Activated B cell treated with CpG ODN at 0.5 μM for 24 hours (primary cell): ENCODE measurements at regions of chr20 and their contacts with region 1.

Region 1: GRCh38 chr20:208942-209566 is 18.0 kb upstream of the DEFB129 start:
- DNase-seq: no peak
- ATAC-seq: peak; percentile 70
- H3K4me3 Mint-ChIP-seq: no peak overlapping the region
- H3K27ac Mint-ChIP-seq: no peak overlapping the region
- H3K4me1 Mint-ChIP-seq: no peaks in the 10 kb centered on the region
- H3K27me3 Mint-ChIP-seq: peaks cover 3% of the 10 kb centered on the region
- CTCF ChIP-seq: no peak

Region 2: DNA sequence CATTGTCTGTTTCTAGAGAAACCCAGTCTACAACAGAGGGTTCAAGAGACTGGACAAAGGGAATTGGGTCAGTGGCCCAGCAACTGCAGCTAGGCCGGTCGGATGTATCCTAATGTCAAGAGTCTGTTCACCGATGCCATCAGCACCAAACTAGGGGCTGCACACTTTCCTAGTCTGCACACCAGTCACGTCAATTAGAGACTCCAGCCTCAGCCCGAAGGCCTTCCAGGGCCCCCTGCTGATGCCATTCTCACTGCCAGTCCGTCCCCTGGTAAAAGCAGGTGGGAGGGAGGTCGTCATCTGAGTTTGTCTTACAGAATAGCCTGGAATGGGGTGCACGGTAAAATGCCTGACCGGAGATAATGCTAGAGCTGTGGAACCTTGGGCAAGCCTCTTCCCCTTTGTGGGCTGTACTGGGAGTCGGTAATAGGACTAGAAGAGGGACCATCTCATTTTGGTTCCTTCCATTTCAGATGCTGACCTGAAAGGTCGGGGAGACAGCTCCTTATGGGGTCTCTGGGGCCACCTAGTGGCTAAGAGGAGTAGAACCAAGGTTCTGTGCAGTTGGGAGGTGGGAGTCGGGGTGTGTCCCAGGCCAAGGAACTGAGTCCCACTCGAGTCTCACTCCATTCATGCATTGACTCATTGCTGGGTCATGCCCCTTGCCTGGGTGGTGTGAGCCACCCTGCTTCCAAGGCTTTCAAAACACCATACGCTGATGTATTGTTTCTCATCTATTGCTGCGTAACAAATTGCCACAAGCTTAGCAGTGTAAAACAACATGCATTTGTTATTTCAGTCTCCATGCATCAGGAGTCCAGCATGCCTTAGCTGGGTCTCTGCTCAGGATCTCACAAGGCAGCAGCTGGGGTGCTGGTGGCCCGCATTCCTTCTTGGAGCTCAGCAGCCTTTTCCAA is 121.4 kb after region 1 on chr20:
- CTCF ChIA-PET with region 1: interaction called, 13 read pairs
- POLR2A ChIA-PET with region 1: no interaction called
- intact Hi-C with region 1: loop called (anchors 1 kb)
- DNase-seq: peak; percentile 34
- ATAC-seq: peak; percentile 51
- H3K4me3 Mint-ChIP-seq: peak overlapping the region; percentile 19
- H3K27ac Mint-ChIP-seq: peak overlapping the region; percentile 61
- H3K4me1 Mint-ChIP-seq: peaks cover 33% of the 10 kb centered on the region
- H3K27me3 Mint-ChIP-seq: no peaks in the 10 kb centered on the region
- CTCF ChIP-seq: peak; percentile 15

Region 3: DNA sequence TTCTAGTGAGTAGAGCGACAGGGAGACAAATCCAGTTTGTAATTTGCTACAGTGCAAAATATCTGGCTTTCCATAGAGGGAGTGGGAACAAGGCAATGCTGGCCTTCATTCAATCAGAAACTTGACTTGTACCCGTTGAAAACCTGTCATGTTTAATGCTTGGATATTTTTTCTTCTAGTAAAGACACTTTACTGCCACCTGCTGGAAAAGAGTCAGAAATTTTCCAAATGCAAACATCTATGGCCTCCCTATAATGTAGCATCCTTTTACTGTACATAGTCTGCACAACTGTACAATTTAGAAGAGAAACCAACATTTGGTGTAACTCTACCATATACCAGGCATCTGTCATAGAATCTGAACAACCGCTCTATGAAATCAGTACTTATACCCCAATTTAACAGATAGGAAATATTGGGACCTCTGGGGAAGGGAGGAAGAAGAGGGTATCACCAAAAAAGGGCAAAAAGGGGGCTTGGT is 269.9 kb after region 1 on chr20:
- CTCF ChIA-PET with region 1: no interaction called
- POLR2A ChIA-PET with region 1: no interaction called
- intact Hi-C with region 1: loop called (anchors 1 kb)
- DNase-seq: no peak
- ATAC-seq: peak; percentile 66
- H3K4me3 Mint-ChIP-seq: no peak overlapping the region
- H3K27ac Mint-ChIP-seq: no peak overlapping the region
- H3K4me1 Mint-ChIP-seq: peaks cover 5% of the 10 kb centered on the region
- H3K27me3 Mint-ChIP-seq: no peaks in the 10 kb centered on the region
- CTCF ChIP-seq: no peak